ENCODE measurements at regions of chr11 and their contacts with region 1.

Region 1: DNA sequence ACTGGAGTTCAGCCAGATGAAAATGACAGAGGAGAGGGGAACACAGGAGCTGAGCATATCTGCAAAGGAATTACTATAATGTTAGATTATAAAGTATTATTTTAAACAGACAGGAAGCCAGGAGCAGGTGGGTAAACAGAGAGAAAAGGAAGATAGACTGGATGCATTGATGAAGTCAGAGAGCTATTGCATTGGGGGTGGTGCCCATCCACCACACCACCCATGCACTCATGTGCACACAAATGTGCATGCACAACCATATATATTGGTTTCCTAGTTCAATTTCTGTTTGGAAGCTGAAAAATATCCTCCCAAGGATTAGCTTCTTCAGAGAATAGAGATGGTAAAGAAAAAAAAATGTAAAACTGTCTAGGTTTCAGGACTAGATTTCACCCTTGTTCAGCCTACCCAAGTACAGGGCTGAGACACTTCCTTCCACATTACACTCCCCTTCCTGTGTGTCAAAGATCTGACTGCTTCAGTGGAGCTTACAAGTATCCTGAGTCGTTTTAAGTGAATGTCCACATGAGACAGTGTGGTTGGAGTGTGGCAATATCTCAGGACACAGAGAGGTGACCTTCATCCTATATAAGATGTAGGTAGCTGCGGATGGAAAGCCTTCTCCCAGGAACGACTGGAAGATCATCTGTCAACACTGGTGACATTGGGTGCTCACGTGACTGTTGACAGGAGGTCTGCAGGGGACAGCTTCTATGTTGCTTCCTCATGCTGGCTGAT is 12.2 kb upstream of the SMPD1 start:
- DNase-seq: no peak
- ATAC-seq: peak; percentile 18 to 42; a peak in 3 of 6 replicates
- H3K4me3 ChIP-seq: no peak overlapping the region
- H3K27ac ChIP-seq: no peak overlapping the region
- H3K4me1 ChIP-seq: 0 out of 3 replicates have a peak, but pooled peaks cover 7% of the 10 kb centered on the region
- CTCF ChIP-seq: no peak
- EP300 ChIP-seq: no peak
- POLR2A ChIP-seq: no peak
- RAD21 ChIP-seq: no peak

Region 2: GRCh38 chr11:5689551-5689983 is 688.5 kb before region 1 on chr11 and contains the start of gene TRIM22:
- CTCF ChIA-PET with region 1: no interaction called
- POLR2A ChIA-PET with region 1: no interaction called
- DNase-seq: no peak
- ATAC-seq: no peak
- H3K4me3 ChIP-seq: no peak within 1 kb of the TSS
- H3K27ac ChIP-seq: peak within 1 kb of the TSS; percentile 36 to 41; a peak in 4 of 6 replicates
- H3K4me1 ChIP-seq: peaks cover 6% of the 10 kb centered on the region; the same call in 2 of the 3 replicates
- CTCF ChIP-seq: no peak
- EP300 ChIP-seq: no peak
- POLR2A ChIP-seq: no peak
- RAD21 ChIP-seq: no peak
- polyA plus RNA-seq, gene TRIM22: 2.4 and 2.7 TPM in 2 replicates

Region 3: DNA sequence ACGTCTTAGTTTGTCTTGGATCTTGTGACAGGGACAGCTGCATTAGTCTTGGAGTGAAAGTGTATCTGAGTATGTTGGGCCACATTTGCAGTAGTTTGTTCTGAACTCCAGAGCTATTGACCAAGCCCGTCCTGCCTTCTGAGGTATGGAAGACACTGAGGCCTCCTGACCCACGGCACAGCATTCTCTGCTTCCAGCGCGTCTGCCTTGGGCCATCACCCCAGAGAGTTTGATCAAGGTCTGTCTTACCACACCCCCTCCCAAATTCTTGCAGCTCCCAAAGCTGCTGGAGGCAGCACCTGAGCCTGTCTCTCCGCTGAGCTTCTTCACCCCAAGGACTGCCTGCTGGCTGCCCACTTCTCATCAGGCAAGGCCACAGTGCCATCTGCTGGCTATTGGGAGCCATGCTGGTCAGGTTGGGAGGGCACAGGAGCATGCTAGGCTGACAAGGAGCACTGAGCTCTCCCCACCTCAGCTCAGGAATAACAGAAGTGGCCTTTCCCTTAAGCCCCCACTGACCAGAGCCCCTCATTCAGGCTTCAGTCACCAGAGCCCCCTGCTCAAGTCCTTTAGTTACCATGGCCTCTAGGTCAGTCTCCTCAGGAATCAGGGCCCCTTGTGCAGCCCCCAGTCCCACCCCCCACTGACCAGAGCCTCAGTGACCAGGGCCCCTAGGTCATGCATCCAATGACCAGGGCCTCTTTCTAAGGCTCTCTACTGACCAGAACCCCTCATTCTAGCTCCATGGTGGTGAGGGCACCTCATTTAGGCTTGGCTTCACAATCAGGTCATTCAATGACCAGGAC is 15.0 kb before region 1 on chr11:
- CTCF ChIA-PET with region 1: interaction called, 61 read pairs
- POLR2A ChIA-PET with region 1: no interaction called
- DNase-seq: peak; percentile 81 to 82
- ATAC-seq: peak; percentile 95 to 99
- H3K4me3 ChIP-seq: no peak overlapping the region
- H3K27ac ChIP-seq: no peak overlapping the region
- H3K4me1 ChIP-seq: peaks cover 10% of the 10 kb centered on the region; the same call in 2 of the 3 replicates
- CTCF ChIP-seq: peak; percentile 81
- EP300 ChIP-seq: no peak
- POLR2A ChIP-seq: no peak
- RAD21 ChIP-seq: peak; percentile 79 to 87

Region 4: GRCh38 chr11:6411594-6412031 is 33.5 kb after region 1 on chr11:
- CTCF ChIA-PET with region 1: interaction called, 12 read pairs
- POLR2A ChIA-PET with region 1: no interaction called
- DNase-seq: no peak
- ATAC-seq: no peak
- H3K4me3 ChIP-seq: no peak overlapping the region
- H3K27ac ChIP-seq: no peak overlapping the region
- H3K4me1 ChIP-seq: no peaks in the 10 kb centered on the region
- CTCF ChIP-seq: no peak
- EP300 ChIP-seq: no peak
- POLR2A ChIP-seq: no peak
- RAD21 ChIP-seq: no peak

Region 5: GRCh38 chr11:6443269-6444003 is 65.4 kb after region 1 on chr11:
- CTCF ChIA-PET with region 1: interaction called, 142 read pairs
- POLR2A ChIA-PET with region 1: interaction called, 4 read pairs
- DNase-seq: peak; percentile 36 to 57
- ATAC-seq: peak; percentile 56 to 83; a peak in 5 of 6 replicates
- H3K4me3 ChIP-seq: no peak overlapping the region
- H3K27ac ChIP-seq: no peak overlapping the region
- H3K4me1 ChIP-seq: peaks cover 13% of the 10 kb centered on the region
- CTCF ChIP-seq: peak; percentile 64
- EP300 ChIP-seq: no peak
- POLR2A ChIP-seq: no peak
- RAD21 ChIP-seq: peak; percentile 73 to 75

Region 6: DNA sequence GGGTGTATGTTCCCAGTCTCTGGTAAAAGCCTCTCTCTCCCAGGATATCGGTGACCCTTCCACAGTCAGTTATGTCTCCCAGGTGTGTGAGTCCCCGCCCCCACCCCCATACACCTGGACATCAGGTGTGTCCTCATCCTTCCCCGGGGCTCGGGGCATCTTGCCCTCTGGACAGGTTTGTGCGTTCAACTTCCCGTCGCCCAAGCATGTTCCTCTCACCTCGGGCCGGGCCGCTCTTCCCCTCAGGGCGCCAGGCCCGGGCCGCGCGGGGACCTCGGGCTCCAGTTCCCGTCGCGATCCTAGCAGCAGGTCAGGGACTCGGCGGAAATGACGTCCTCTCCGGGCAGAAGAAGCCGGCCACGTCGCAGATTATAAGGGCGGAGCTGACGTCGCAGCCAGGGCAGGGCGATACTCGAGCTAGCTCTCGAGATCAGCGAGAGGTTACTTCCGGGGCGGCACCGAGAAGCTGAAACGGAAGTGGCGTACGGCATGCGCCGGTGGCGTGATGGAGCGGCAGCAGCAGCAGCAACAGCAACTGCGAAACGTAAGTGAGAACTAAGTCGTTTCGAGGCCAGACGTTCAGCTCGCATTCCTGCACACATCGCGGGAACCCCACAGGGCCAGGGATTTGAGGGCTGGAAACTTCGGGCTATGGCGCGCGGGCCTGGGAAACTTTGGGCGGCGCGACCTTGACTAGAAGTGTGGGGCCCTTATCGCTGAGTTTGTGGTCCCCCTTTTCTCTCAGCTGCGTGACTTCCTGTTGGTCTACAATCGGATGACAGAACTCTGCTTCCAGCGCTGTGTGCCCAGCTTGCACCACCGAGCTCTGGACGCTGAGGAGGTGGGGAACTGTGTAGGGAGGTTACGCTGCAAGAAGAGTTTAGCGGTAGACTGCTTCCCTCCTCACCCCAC is 103.2 kb after region 1 on chr11 and contains the starts of genes ARFIP2 and TIMM10B:
- CTCF ChIA-PET with region 1: interaction called, 22 read pairs
- POLR2A ChIA-PET with region 1: interaction called, 4 read pairs
- DNase-seq: peak; percentile 97 to 99
- ATAC-seq: peak; percentile 97 to 99
- H3K4me3 ChIP-seq: peak within 1 kb of the TSS; percentile 90
- H3K27ac ChIP-seq: peak within 1 kb of the TSS; percentile 86 to 94
- H3K4me1 ChIP-seq: peaks cover 25% of the 10 kb centered on the region
- CTCF ChIP-seq: no peak
- EP300 ChIP-seq: no peak
- POLR2A ChIP-seq: peak; percentile 86
- RAD21 ChIP-seq: no peak
- polyA plus RNA-seq, gene ARFIP2: 87.9 and 88.5 TPM in 2 replicates
- polyA plus RNA-seq, gene TIMM10B: 31.6 and 35.6 TPM in 2 replicates

Region 7: DNA sequence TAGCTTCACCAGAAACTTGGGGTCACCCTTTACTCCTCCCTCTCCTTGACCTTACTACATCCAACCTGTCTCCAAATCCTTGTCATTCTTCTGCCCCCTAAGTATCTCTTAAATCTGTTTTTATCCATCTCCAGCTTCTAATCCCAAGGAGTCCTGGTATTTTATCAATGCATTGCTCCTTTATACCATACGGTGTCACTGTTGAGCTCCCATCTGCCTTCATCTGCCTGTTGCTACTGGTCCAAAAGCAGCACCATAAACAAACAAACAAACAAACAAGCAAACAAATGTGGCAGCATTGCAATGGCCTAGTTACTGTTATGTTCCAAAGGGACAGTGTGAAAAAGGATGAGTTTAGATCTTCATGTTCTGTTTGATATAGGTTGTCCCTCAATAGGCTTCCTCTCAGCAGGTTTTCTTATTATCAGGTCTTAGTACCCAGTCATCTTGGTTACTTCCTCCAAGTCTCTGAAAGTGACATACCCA is 153.2 kb after region 1 on chr11:
- CTCF ChIA-PET with region 1: interaction called, 24 read pairs
- POLR2A ChIA-PET with region 1: no interaction called
- DNase-seq: peak; percentile 57 to 79
- ATAC-seq: peak; percentile 88 to 93
- H3K4me3 ChIP-seq: no peak overlapping the region
- H3K27ac ChIP-seq: no peak overlapping the region
- H3K4me1 ChIP-seq: no peaks in the 10 kb centered on the region
- CTCF ChIP-seq: peak; percentile 76
- EP300 ChIP-seq: no peak
- POLR2A ChIP-seq: no peak
- RAD21 ChIP-seq: peak; percentile 69 to 76

Region 8: GRCh38 chr11:6757373-6757967 is 379.4 kb after region 1 on chr11:
- CTCF ChIA-PET with region 1: interaction called, 12 read pairs
- POLR2A ChIA-PET with region 1: no interaction called
- DNase-seq: peak; percentile 35 to 58
- ATAC-seq: peak; percentile 91 to 94
- H3K4me3 ChIP-seq: no peak overlapping the region
- H3K27ac ChIP-seq: no peak overlapping the region
- H3K4me1 ChIP-seq: no peaks in the 10 kb centered on the region
- CTCF ChIP-seq: peak; percentile 62
- EP300 ChIP-seq: no peak
- POLR2A ChIP-seq: no peak
- RAD21 ChIP-seq: peak; percentile 56 to 72

Region 9: DNA sequence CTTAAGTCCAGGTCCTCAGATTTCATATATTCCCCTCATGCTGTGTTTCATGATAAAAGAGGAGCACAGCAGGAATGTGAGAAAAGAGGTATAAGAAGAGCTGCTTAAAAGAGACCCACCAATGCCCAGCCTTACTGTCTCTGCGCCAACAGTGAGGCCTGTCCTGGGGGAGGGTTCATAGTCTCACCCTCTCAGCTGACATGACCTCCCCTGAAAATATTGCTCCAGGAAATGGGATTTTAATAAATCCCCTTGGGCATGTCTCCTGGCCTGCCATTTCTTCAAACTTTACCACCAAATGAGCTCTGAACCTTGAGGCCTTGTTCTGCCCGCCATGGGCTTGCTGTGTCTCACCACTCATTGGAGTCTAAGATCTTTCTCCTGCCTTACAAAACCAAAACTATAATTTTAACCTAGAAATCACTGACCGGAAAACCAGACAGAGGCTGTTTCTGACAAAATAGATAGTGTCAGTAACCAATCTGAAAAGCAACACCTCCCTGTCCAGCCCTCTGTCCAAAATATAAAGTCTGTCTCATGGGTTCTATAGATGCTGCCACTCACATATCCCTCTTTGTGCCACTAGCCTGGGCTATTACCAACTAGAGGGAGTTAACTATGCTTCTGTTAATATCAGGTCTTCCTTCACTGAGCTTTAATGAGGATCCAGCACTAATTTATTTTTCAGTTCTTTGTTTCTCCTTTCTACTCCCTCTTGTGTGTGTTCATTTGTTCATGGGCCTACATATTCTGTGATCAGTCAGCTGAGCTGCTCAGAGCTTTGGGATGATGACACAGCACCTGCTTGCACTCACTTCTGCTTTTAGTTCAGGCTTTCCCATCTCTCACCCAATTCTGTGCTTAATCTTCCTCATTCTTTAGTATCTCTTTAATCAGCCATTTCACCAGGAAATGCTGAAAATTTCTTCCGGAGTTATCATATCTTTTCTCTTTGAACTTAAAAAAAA is 394.1 kb after region 1 on chr11 and contains the start of gene OR2AG2:
- CTCF ChIA-PET with region 1: no interaction called
- POLR2A ChIA-PET with region 1: no interaction called
- DNase-seq: no peak
- ATAC-seq: no peak
- H3K4me3 ChIP-seq: no peak within 1 kb of the TSS
- H3K27ac ChIP-seq: no peak within 1 kb of the TSS
- H3K4me1 ChIP-seq: no peaks in the 10 kb centered on the region
- CTCF ChIP-seq: no peak
- EP300 ChIP-seq: no peak
- POLR2A ChIP-seq: no peak
- RAD21 ChIP-seq: no peak
- polyA plus RNA-seq, gene OR2AG2: 0.04 and 0.17 TPM in 2 replicates